Heart right ventricle (tissue), 16 donors: ENCODE measurements at regions of chr17 and their contacts with region 1.

Region 1: DNA sequence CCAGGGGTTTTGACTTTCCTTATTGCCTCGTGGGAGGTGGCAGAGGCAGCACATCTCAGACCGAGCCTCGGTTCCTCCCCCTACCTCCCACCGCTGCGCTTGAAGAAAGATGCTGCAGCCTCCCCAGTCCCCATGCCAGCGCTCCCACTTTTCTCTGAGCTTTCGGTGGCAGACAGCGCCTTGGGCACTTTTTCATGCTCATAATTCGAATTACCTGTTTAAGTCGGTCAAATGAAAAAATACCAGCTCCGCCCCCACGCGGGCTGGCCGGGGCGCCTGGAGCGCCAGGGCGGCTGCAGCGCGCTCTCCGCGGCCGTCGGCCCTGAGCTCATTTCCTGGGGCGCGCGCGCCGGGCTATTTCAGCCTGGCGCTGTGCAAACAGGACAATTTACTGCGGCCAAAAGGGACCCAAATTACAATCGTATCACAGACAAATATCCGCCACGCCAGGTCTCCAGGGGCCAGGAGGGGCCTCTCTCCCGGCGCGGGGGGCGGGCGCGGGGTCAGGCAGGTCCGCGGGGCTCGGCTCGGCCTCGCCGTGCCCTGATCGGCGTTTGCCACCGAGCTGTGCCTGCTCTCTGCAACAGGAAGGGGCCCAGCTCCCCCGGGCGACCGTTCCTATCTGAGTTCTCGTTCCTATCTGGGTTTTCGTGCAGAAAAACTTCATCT is 45.0 kb downstream of the SOST start:
- DNase-seq: peak; percentile 45 to 51
- ATAC-seq: peak; percentile 72 to 88 (median 82)
- H3K4me3 ChIP-seq: peak overlapping the region in 9 of 10 donors; percentile 38 to 60 (median 55)
- H3K27ac ChIP-seq: peak overlapping the region in 9 of 10 donors; percentile 12 to 80 (median 62)
- H3K4me1 ChIP-seq: peaks cover 0 to 30% (median 18%) of the 10 kb centered on the region in 9 donors
- H3K27me3 ChIP-seq: peaks cover 0 to 18% (median 0%) of the 10 kb centered on the region in 7 donors
- CTCF ChIP-seq: peak in 1 of 9 donors; percentile 28

Region 2: GRCh38 chr17:43745541-43745940 is 31.9 kb after region 1 on chr17:
- intact Hi-C with region 1: loop called in 4 of 10 experiments (anchors 2 to 5 kb)
- DNase-seq: no peak
- ATAC-seq: peak in 2 of 8 donors; percentile 61 to 71
- H3K4me3 ChIP-seq: no peak overlapping the region
- H3K27ac ChIP-seq: no peak overlapping the region
- H3K4me1 ChIP-seq: peaks cover 0 to 15% (median 0%) of the 10 kb centered on the region in 9 donors
- H3K27me3 ChIP-seq: peaks cover 0 to 12% (median 0%) of the 10 kb centered on the region in 7 donors
- CTCF ChIP-seq: no peak

Region 3: GRCh38 chr17:43753493-43754129 is 40.0 kb after region 1 on chr17:
- intact Hi-C with region 1: loop called in 3 of 10 experiments (anchors 5 kb)
- DNase-seq: no peak
- ATAC-seq: no peak
- H3K4me3 ChIP-seq: no peak overlapping the region
- H3K27ac ChIP-seq: no peak overlapping the region
- H3K4me1 ChIP-seq: peaks cover 3 to 19% (median 11%) of the 10 kb centered on the region in 9 donors
- H3K27me3 ChIP-seq: peaks cover 0 to 57% (median 33%) of the 10 kb centered on the region in 7 donors
- CTCF ChIP-seq: no peak

Region 4: DNA sequence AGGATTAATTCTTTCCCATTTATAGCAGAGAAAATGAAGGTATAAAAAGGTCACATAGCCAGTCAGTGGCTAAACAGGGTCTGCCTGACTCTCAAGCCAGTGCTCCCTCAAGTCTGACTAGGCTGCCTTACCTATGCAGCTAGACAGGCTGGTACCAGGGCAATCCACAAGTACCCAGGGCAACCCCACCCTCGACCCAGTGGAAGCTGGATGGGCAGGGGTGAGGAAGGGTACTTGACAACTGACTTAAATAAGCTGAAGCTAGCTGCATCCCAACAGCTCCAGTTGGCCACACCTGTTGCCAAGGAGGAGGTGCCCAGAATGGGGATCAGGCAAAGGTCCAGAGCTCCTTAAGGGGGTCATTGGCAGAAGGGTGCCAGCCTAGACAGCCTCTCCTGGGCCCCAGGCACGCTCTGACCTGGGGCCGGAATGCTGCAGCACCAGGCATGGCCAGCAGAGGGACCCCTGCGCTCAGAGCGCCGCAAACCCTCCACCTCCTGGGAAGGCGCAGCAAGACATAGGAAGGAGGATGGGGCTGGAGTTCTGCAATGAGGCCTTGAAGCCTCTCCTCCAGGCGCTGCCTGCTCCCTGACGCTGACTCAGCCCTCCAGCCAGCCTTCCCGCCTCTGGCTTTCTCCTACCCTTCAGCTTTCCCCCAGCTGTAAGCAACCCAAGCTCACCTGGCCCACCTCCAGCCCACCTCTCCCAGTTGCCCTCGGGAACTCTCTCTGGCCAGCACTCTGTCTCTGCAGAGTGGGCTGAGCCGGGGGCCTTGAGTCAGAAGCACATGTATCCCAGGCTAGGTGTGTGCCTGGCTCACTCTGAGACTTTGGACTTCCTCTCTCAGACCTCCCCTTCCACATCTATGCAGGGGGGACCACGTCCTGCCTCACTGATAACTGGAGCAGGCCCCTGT is 164.9 kb after region 1 on chr17:
- intact Hi-C with region 1: no loop called
- DNase-seq: peak; percentile 65 to 78
- ATAC-seq: peak; percentile 68 to 87 (median 78)
- H3K4me3 ChIP-seq: no peak overlapping the region
- H3K27ac ChIP-seq: peak overlapping the region in 1 of 10 donors; percentile 5
- H3K4me1 ChIP-seq: peaks cover 0 to 24% (median 9%) of the 10 kb centered on the region in 9 donors
- H3K27me3 ChIP-seq: no peaks in the 10 kb centered on the region
- CTCF ChIP-seq: peak; percentile 86 to 99 (median 97)

Region 5: GRCh38 chr17:43958953-43959352 is 245.3 kb after region 1 on chr17:
- intact Hi-C with region 1: no loop called
- DNase-seq: no peak
- ATAC-seq: no peak
- H3K4me3 ChIP-seq: no peak overlapping the region
- H3K27ac ChIP-seq: no peak overlapping the region
- H3K4me1 ChIP-seq: no peaks in the 10 kb centered on the region
- H3K27me3 ChIP-seq: peaks cover 0 to 57% (median 23%) of the 10 kb centered on the region in 7 donors
- CTCF ChIP-seq: no peak